ENCODE measurements at regions of chr15 and their contacts with region 1.

Region 1: GRCh38 chr15:65993236-65993635 is 123.9 kb downstream of the RAB11A start:
- DNase-seq: no peak
- ATAC-seq: no peak
- H3K4me3 ChIP-seq: no peak overlapping the region
- H3K27ac ChIP-seq: no peak overlapping the region
- H3K4me1 ChIP-seq: no peaks in the 10 kb centered on the region
- H3K27me3 ChIP-seq: no peaks in the 10 kb centered on the region

Region 2: DNA sequence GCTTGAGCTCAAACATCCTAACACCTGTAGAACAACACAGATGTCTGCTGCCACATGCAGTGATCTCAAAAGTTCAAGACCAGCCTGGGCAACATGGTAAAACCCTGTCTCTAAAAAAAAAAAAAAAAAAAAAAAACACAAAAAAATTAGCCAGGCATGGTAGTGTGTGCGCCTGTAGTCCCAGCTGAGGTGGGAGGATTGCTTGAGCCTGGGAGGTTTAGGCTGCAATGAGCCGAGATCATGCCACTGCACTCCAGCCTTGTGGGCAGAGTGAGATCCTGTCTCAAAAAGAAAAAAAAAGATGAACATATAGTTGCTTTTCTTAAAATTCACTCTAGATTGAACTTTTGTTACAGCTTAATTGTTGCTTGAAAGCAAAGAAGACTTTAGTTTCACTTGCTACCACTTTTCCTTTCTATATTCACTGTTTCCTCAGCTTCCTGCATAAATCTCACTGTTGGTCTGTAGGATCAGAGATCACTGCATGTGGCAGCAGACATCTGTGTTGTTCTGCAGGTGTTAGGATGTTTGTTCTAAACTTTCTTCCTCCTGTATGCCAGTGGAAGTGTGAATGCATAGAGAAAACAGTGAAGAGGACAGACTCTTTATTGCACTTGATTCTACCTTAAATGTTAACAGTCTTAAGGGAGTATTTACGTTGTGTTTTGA is 111.3 kb before region 1 on chr15:
- intact Hi-C with region 1: no loop called
- DNase-seq: no peak
- ATAC-seq: no peak
- H3K4me3 ChIP-seq: no peak overlapping the region
- H3K27ac ChIP-seq: no peak overlapping the region
- H3K4me1 ChIP-seq: no peaks in the 10 kb centered on the region
- H3K27me3 ChIP-seq: no peaks in the 10 kb centered on the region

Region 3: GRCh38 chr15:66269326-66270038 is 276.2 kb after region 1 on chr15:
- intact Hi-C with region 1: loop called in 1 of 4 experiments (anchors 10 kb)
- DNase-seq: no peak
- ATAC-seq: peak in 1 of 2 donors; percentile 46
- H3K4me3 ChIP-seq: no peak overlapping the region
- H3K27ac ChIP-seq: no peak overlapping the region
- H3K4me1 ChIP-seq: no peaks in the 10 kb centered on the region
- H3K27me3 ChIP-seq: no peaks in the 10 kb centered on the region